Right cardiac atrium (tissue), 5 donors: ENCODE measurements at regions of chr3 and their contacts with region 1.

Region 1: DNA sequence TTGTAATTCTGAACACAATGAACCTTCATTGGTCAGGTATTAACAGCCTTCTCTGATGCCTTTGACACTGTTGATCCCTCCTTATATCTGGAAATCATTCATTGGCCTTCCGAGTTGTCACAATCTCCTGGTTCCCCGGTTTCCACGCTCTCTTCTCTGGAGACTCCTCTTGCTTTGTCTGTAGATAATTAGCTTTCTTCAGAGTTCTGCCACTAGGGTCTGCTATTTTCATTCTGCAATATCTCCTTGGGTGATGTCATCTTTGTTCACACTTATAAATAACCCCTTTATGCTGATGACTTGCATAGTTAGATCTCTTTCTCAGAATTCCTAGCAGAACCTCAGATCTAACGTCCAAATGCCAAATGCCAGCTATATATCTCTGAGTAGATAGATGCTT is 583.8 kb upstream of the ZNF717 start:
- DNase-seq: no peak
- ATAC-seq: no peak
- H3K4me3 ChIP-seq: no peak overlapping the region
- H3K27ac ChIP-seq: no peak overlapping the region
- H3K4me1 ChIP-seq: no peaks in the 10 kb centered on the region
- H3K27me3 ChIP-seq: no peaks in the 10 kb centered on the region

Region 2: GRCh38 chr3:76044601-76045600 is 324.3 kb before region 1 on chr3:
- intact Hi-C with region 1: no loop called
- DNase-seq: peak in 1 of 3 donors; percentile 58
- ATAC-seq: no peak
- H3K4me3 ChIP-seq: no peak overlapping the region
- H3K27ac ChIP-seq: no peak overlapping the region
- H3K4me1 ChIP-seq: no peaks in the 10 kb centered on the region
- H3K27me3 ChIP-seq: no peaks in the 10 kb centered on the region

Region 3: GRCh38 chr3:76570436-76571057 is 201.4 kb after region 1 on chr3:
- intact Hi-C with region 1: loop called in 1 of 4 experiments (anchors 10 kb)
- DNase-seq: no peak
- ATAC-seq: no peak
- H3K4me3 ChIP-seq: no peak overlapping the region
- H3K27ac ChIP-seq: no peak overlapping the region
- H3K4me1 ChIP-seq: no peaks in the 10 kb centered on the region
- H3K27me3 ChIP-seq: no peaks in the 10 kb centered on the region

Region 4: GRCh38 chr3:76585794-76586392 is 216.7 kb after region 1 on chr3:
- intact Hi-C with region 1: loop called in 1 of 4 experiments (anchors 10 kb)
- DNase-seq: no peak
- ATAC-seq: no peak
- H3K4me3 ChIP-seq: no peak overlapping the region
- H3K27ac ChIP-seq: no peak overlapping the region
- H3K4me1 ChIP-seq: no peaks in the 10 kb centered on the region
- H3K27me3 ChIP-seq: no peaks in the 10 kb centered on the region